ENCODE measurements at regions of chr6 and their contacts with region 1.

Region 1: GRCh38 chr6:125974214-125974866 is 12.0 kb upstream of the TRMT11 start:
- DNase-seq: peak in 2 of 9 experiments; percentile 54 to 65
- ATAC-seq: peak; percentile 63
- H3K4me3 ChIP-seq: no peak overlapping the region
- H3K4me3 Mint-ChIP-seq: no peak overlapping the region
- H3K27ac ChIP-seq: no peak overlapping the region
- H3K27ac Mint-ChIP-seq: no peak overlapping the region
- H3K4me1 ChIP-seq: no peaks in the 10 kb centered on the region
- H3K4me1 Mint-ChIP-seq: peaks cover 13% of the 10 kb centered on the region
- H3K27me3 ChIP-seq: no peaks in the 10 kb centered on the region
- H3K27me3 Mint-ChIP-seq: no peaks in the 10 kb centered on the region
- CTCF ChIP-seq: peak; percentile 69

Region 2: DNA sequence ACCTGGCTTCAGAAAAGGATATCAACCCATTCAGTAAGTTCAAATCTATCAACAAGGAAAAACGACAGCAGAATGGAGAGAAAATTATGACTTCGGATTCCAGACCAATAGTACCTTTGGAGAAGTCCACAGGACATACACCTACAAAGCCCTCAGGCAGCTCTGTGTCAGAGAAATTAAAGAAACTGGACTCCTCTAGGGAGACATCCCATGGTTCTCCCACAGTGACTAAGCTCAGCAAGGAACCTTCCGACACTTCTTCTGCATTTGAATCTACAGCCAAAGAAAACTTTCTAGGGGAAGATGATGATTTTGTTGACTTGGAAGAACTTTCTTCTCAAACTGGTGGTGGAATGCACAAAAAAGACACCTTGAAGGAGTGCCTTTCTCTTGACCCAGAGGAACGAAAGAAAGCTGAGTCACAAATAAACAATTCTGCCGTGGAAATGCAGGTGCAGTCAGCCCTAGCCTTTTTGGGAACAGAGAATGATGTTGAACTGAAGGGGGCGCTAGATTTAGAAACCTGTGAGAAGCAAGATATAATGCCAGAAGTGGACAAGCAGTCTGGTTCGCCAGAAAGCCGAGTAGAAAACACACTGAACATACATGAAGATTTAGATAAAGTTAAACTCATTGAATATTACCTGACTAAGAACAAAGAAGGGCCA is 85.2 kb before region 1 on chr6:
- CTCF ChIA-PET with region 1: interaction called, 3 read pairs
- POLR2A ChIA-PET with region 1: no interaction called
- intact Hi-C with region 1: loop called in 1 of 2 experiments (anchors 5 kb)
- DNase-seq: peak in 3 of 9 experiments; percentile 15 to 53 (median 42)
- ATAC-seq: no peak
- H3K4me3 ChIP-seq: no peak overlapping the region
- H3K4me3 Mint-ChIP-seq: no peak overlapping the region
- H3K27ac ChIP-seq: no peak overlapping the region
- H3K27ac Mint-ChIP-seq: no peak overlapping the region
- H3K4me1 ChIP-seq: no peaks in the 10 kb centered on the region
- H3K4me1 Mint-ChIP-seq: no peaks in the 10 kb centered on the region
- H3K27me3 ChIP-seq: no peaks in the 10 kb centered on the region
- H3K27me3 Mint-ChIP-seq: no peaks in the 10 kb centered on the region
- CTCF ChIP-seq: peak; percentile 68

Region 3: GRCh38 chr6:125906158-125906998 is 68.0 kb before region 1 on chr6:
- CTCF ChIA-PET with region 1: interaction called, 10 read pairs
- POLR2A ChIA-PET with region 1: no interaction called
- intact Hi-C with region 1: loop called (anchors 1 to 5 kb)
- DNase-seq: peak in 7 of 9 experiments; percentile 13 to 63 (median 43)
- ATAC-seq: peak; percentile 71
- H3K4me3 ChIP-seq: no peak overlapping the region
- H3K4me3 Mint-ChIP-seq: no peak overlapping the region
- H3K27ac ChIP-seq: no peak overlapping the region
- H3K27ac Mint-ChIP-seq: no peak overlapping the region
- H3K4me1 ChIP-seq: no peaks in the 10 kb centered on the region
- H3K4me1 Mint-ChIP-seq: peaks cover 2% of the 10 kb centered on the region
- H3K27me3 ChIP-seq: no peaks in the 10 kb centered on the region
- H3K27me3 Mint-ChIP-seq: no peaks in the 10 kb centered on the region
- CTCF ChIP-seq: peak; percentile 60

Region 4: GRCh38 chr6:125956506-125957390 is 17.6 kb before region 1 on chr6 and contains the start of gene HINT3:
- CTCF ChIA-PET with region 1: interaction called, 19 read pairs
- POLR2A ChIA-PET with region 1: interaction called, 4 read pairs
- intact Hi-C with region 1: loop called in 1 of 2 experiments (anchors 2 kb)
- DNase-seq: peak; percentile 95 to 99 (median 98)
- ATAC-seq: peak; percentile 88
- H3K4me3 ChIP-seq: peak within 1 kb of the TSS; percentile 79 to 93
- H3K4me3 Mint-ChIP-seq: no peak within 1 kb of the TSS
- H3K27ac ChIP-seq: peak within 1 kb of the TSS; percentile 97 to 98
- H3K27ac Mint-ChIP-seq: no peak within 1 kb of the TSS
- H3K4me1 ChIP-seq: peaks cover 26% of the 10 kb centered on the region
- H3K4me1 Mint-ChIP-seq: peaks cover 9% of the 10 kb centered on the region
- H3K27me3 ChIP-seq: no peaks in the 10 kb centered on the region
- H3K27me3 Mint-ChIP-seq: peaks cover 6% of the 10 kb centered on the region
- CTCF ChIP-seq: peak; percentile 96
- total RNA-seq, gene HINT3: 14.2 to 15.4 TPM

Region 5: DNA sequence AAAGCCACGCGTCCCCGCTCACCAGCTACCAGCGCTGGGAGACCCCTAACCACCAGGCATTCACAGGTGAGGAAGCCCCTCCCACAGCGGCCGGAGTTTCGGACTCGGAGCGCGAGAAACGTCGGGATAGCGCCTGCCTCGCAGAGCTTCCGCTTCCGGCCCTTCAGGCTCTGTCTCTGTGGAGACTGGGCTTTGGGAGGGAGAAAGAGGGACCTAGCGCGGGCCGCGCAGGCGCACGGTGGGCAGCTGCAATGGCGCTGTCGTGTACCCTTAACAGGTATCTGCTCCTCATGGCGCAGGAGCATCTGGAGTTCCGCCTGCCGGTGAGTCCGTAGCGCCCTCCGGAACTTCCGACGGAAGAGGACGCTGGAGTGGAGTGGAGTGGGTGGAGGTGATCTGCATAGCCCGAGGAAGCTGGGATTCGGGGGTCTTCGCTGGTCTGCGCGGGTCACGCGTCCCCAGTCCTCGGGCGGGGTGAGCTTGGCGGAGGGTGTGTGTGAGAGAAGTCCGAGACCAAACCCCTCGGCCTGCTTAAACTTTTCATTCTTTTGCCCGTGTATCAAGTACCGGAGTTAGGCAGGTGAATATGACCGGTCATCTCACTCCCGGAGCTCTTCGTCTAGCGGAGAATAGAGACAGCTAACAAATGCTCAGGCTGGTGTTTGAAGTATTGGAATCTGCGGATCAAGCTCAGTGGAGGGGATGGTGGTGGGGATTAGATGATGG is 12.1 kb after region 1 on chr6 and contains the start of gene TRMT11:
- CTCF ChIA-PET with region 1: interaction called, 38 read pairs
- POLR2A ChIA-PET with region 1: interaction called, 8 read pairs
- intact Hi-C with region 1: no loop called
- DNase-seq: peak; percentile 63 to 92 (median 79)
- ATAC-seq: peak; percentile 95
- H3K4me3 ChIP-seq: peak within 1 kb of the TSS; percentile 75 to 95
- H3K4me3 Mint-ChIP-seq: peak within 1 kb of the TSS; percentile 35
- H3K27ac ChIP-seq: peak within 1 kb of the TSS; percentile 77 to 84
- H3K27ac Mint-ChIP-seq: no peak within 1 kb of the TSS
- H3K4me1 ChIP-seq: peaks cover 31% of the 10 kb centered on the region
- H3K4me1 Mint-ChIP-seq: peaks cover 15% of the 10 kb centered on the region
- H3K27me3 ChIP-seq: no peaks in the 10 kb centered on the region
- H3K27me3 Mint-ChIP-seq: no peaks in the 10 kb centered on the region
- CTCF ChIP-seq: no peak
- total RNA-seq, gene TRMT11: 19.0 to 19.4 TPM

Measured in CD8-positive, alpha-beta T cell (primary cell).